Endothelial cell of umbilical vein (primary cell): ENCODE measurements at regions of chr16 and their contacts with region 1.

Region 1: DNA sequence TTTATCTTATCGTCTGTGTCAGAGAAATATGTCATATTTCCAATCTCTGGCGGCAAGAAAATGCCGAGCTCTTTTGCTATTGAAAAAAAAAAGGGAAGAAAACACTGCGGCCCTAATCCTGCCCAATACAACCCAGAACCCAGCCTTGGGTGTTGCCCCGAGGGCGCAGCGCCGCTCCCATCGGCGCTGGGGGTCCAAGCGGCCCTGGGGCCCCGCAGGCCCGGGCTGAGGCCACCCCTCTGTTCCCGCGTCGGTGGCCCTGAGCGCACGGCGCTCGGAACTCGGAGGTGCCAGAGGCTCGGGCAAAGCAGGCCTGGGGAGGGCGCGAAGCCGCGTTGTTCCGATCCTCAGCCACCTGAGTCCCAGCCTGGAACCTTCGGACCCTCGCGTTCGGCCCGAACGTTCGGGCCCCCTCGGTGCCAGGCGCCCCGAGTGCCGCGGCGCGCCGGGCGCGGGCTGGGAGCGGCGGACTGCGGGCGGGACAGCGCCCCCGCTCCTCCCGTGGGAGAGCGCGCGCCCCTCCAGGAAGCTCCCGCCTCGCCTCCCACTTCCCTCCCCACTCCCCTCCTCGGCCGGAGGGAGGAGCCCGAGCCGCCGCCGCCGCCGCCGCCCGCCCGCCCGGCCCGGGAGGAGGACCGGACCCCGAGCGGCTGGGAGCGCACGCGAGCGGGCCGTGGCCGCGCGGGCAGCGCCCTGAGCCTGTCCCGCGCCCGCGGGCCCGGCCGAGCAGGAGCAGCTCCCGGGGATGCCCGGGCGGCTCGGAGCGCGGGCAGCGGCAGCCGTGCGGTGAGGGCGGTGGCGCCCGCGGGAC is at the start of gene CPNE2:
- DNase-seq: peak; percentile 65
- H3K4me3 ChIP-seq: peak within 1 kb of the TSS; percentile 64 to 86 (median 74)
- H3K27ac ChIP-seq: peak within 1 kb of the TSS; percentile 58
- H3K4me1 ChIP-seq: peaks cover 21% of the 10 kb centered on the region
- H3K27me3 ChIP-seq: no peaks in the 10 kb centered on the region
- CTCF ChIP-seq: no peak
- POLR2A ChIP-seq: peak; percentile 45
- total RNA-seq, gene CPNE2: 91.9 and 92.0 TPM in 2 replicates

Region 2: DNA sequence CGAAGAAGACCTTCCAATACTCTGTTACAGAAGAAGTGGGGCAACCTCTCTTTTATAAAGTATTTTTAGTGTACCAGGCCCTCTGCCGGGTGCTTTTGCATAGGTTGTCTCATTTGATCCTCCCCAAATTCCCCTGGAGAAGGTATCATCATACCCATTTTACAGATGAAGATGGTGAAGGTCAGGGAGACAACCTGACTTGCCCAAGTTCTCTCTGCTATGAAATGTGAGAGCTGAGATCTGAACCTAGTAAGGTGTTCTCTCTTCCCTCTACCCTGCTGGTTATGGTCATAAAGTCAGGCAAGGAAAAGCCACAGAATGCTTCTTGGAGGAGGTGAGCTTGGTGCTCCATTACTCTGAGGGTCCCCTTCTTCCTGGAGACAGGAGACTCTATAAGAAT is 188.3 kb before region 1 on chr16:
- CTCF ChIA-PET with region 1: no interaction called
- POLR2A ChIA-PET with region 1: no interaction called
- dilution Hi-C with region 1: no loop called
- intact Hi-C with region 1: no loop called
- DNase-seq: no peak
- H3K4me3 ChIP-seq: no peak overlapping the region
- H3K27ac ChIP-seq: no peak overlapping the region
- H3K4me1 ChIP-seq: no peaks in the 10 kb centered on the region
- H3K27me3 ChIP-seq: peaks cover 0 to 8% of the 10 kb centered on the region in 2 experiments
- CTCF ChIP-seq: no peak
- POLR2A ChIP-seq: no peak

Region 3: GRCh38 chr16:57077714-57078113 is 14.5 kb before region 1 on chr16:
- CTCF ChIA-PET with region 1: interaction called, 34 read pairs
- POLR2A ChIA-PET with region 1: no interaction called
- dilution Hi-C with region 1: no loop called
- intact Hi-C with region 1: no loop called
- DNase-seq: no peak
- H3K4me3 ChIP-seq: no peak overlapping the region
- H3K27ac ChIP-seq: no peak overlapping the region
- H3K4me1 ChIP-seq: no peaks in the 10 kb centered on the region
- H3K27me3 ChIP-seq: no peaks in the 10 kb centered on the region
- CTCF ChIP-seq: no peak
- POLR2A ChIP-seq: no peak

Region 4: DNA sequence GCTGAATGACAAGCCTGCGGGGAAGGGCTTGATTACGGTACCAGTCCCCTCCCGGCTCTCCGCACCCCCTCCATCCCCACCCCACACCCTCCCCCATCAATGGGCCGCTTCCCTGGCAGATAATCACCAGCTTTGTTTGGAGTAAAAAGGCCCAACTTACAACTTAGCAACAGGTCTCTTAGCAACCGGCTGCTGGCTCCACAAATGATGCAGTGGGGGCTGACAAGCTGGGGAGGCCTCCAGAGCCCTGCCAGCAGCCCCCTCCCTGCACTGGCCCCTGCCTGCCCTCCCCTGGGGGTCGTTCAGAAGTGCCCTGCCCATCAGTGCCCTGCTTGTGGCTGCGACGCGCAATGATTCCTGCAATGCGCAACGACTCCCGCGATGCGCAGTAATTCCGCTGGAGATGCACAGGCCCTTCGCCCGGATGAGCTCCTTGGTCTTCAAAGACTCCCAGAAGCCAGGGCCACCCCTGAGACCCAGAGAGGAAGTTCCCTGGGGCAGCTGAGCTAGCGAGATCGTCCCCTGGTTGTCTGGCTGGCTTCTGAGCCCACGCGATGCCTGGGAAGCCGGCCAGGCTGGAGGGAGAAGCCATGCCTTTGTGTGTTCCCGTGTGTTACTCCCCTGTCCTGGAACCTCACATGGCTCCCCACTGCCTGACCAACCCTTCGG is 23.5 kb after region 1 on chr16:
- CTCF ChIA-PET with region 1: interaction called, 19 read pairs
- POLR2A ChIA-PET with region 1: interaction called, 7 read pairs
- dilution Hi-C with region 1: no loop called
- intact Hi-C with region 1: no loop called
- DNase-seq: no peak
- H3K4me3 ChIP-seq: no peak overlapping the region
- H3K27ac ChIP-seq: no peak overlapping the region
- H3K4me1 ChIP-seq: no peaks in the 10 kb centered on the region
- H3K27me3 ChIP-seq: no peaks in the 10 kb centered on the region
- CTCF ChIP-seq: no peak
- POLR2A ChIP-seq: no peak

Region 5: DNA sequence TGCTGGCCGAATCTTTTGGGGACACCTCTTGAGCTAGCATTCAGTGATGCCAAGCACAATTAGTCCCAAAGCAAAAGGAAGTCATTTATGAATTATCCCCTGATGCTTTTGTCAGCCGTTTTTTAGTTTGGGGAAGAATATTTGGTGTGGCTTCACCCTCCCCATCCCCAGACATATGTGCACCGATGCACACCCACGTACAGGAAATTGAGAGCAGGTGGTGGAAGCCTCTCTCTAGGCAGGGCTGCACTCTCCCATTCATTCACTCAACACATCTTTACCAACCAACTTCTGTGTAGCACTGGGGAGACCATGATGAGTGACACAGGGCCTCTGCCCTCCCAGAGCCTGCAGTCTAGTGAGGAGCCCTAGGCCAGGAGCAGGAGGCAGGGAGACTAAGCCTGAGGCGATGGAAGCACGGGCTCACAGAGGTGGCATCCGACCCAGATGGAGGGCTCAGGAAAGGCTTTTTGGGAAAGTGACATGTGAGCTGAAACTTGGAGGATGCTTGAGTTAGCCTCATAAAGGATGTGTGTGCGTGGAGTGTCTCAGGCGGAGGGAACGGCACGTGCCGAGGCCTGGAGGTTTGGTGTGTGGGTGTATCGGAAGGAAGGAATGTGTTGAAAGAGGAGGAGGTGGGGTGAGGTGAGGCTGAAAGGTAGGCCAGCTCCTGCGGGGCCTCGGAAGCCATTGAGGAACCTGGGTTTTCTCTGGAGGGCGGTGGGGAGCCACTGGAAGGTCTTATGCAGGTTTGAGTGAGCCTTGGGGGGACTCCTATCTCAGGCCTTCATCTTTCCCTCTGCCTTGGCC is 49.8 kb after region 1 on chr16:
- CTCF ChIA-PET with region 1: interaction called, 57 read pairs
- POLR2A ChIA-PET with region 1: interaction called, 5 read pairs
- dilution Hi-C with region 1: no loop called
- intact Hi-C with region 1: loop called (anchors 2 kb)
- DNase-seq: no peak
- H3K4me3 ChIP-seq: no peak overlapping the region
- H3K27ac ChIP-seq: no peak overlapping the region
- H3K4me1 ChIP-seq: peaks cover 46% of the 10 kb centered on the region
- H3K27me3 ChIP-seq: no peaks in the 10 kb centered on the region
- CTCF ChIP-seq: no peak
- POLR2A ChIP-seq: no peak

Region 6: GRCh38 chr16:57156351-57156703 is 64.1 kb after region 1 on chr16:
- CTCF ChIA-PET with region 1: interaction called, 57 read pairs
- POLR2A ChIA-PET with region 1: interaction called, 4 read pairs
- dilution Hi-C with region 1: no loop called
- intact Hi-C with region 1: no loop called
- DNase-seq: peak; percentile 67
- H3K4me3 ChIP-seq: no peak overlapping the region
- H3K27ac ChIP-seq: no peak overlapping the region
- H3K4me1 ChIP-seq: peaks cover 11% of the 10 kb centered on the region
- H3K27me3 ChIP-seq: no peaks in the 10 kb centered on the region
- CTCF ChIP-seq: no peak
- POLR2A ChIP-seq: no peak

Region 7: GRCh38 chr16:57185944-57186871 is 94.0 kb after region 1 on chr16 and contains the starts of genes PSME3IP1 and RSPRY1:
- CTCF ChIA-PET with region 1: interaction called, 8 read pairs
- POLR2A ChIA-PET with region 1: no interaction called
- dilution Hi-C with region 1: no loop called
- intact Hi-C with region 1: loop called (anchors 2 kb)
- DNase-seq: peak; percentile 100
- H3K4me3 ChIP-seq: peak within 1 kb of the TSS; percentile 88 to 95 (median 89)
- H3K27ac ChIP-seq: peak within 1 kb of the TSS; percentile 89
- H3K4me1 ChIP-seq: peaks cover 34% of the 10 kb centered on the region
- H3K27me3 ChIP-seq: no peaks in the 10 kb centered on the region
- CTCF ChIP-seq: no peak
- POLR2A ChIP-seq: peak; percentile 85
- total RNA-seq, gene PSME3IP1: 91.8 and 98.2 TPM in 2 replicates
- total RNA-seq, gene RSPRY1: 55.1 and 55.8 TPM in 2 replicates

Region 8: GRCh38 chr16:57260294-57260929 is 168.2 kb after region 1 on chr16:
- CTCF ChIA-PET with region 1: no interaction called
- POLR2A ChIA-PET with region 1: no interaction called
- dilution Hi-C with region 1: no loop called
- intact Hi-C with region 1: no loop called
- DNase-seq: peak; percentile 98
- H3K4me3 ChIP-seq: no peak overlapping the region
- H3K27ac ChIP-seq: peak overlapping the region; percentile 92
- H3K4me1 ChIP-seq: peaks cover 23% of the 10 kb centered on the region
- H3K27me3 ChIP-seq: no peaks in the 10 kb centered on the region
- CTCF ChIP-seq: no peak
- POLR2A ChIP-seq: peak; percentile 51